ENCODE measurements at regions of chr9 and their contacts with region 1.

Region 1: DNA sequence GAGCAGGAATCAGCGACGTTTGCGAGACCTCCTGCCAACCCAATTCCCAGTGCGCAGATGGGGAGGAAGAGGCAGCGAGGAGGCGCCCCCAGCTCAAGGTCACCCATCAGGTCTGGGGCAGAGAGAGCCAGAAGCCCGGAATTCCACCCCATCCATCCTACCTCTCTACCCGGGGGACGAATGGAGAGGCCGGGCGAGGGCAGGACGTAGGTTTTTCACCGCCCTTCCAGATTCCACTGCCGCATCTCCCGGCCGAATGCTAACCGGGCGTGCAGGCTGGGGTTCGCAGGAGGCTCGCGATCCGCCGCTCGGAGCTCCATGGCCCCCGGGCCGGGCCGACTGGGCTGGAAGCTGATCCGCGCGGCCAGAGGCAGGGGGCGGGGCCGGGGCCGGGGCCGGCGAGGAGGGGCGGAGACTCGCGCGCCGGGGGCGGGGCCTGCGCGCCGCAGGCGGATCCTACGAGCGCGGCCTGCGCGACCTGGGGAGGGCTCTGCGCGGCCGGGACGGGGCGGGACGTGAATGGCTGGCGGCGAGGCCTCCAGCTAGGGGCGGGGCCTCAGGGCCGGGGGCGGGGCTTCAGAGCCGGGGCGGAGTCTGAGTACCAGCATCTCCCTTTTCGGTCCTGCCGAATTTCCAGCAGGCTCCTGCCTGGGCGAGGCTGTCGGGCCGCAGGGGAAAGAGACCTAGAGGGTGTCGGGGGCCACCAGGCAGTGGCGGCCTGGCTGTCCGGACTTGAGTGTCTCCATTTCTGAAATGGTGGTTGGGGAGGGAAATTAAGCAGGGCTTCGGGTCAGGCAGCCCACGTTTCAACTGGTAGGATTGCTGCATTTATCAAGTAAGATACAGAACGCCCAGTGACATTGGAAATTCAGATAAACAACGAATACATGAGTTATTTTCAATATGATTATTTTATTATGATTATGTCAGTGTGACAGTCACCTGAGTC is at the start of gene ST6GALNAC4:
- DNase-seq: peak; percentile 89 to 93
- ATAC-seq: peak; percentile 75 to 84
- H3K4me3 ChIP-seq: peak within 1 kb of the TSS; percentile 58 to 75 (median 70)
- H3K27ac ChIP-seq: peak within 1 kb of the TSS; percentile 67 to 82 (median 73)
- H3K4me1 ChIP-seq: peaks cover 27 to 28% of the 10 kb centered on the region in 2 donors
- H3K27me3 ChIP-seq: no peaks in the 10 kb centered on the region
- CTCF ChIP-seq: no peak
- POLR2A ChIP-seq: peak; percentile 66 to 68
- total RNA-seq, gene ST6GALNAC4: 11.2 to 48.4 (median 23.6) TPM

Region 2: DNA sequence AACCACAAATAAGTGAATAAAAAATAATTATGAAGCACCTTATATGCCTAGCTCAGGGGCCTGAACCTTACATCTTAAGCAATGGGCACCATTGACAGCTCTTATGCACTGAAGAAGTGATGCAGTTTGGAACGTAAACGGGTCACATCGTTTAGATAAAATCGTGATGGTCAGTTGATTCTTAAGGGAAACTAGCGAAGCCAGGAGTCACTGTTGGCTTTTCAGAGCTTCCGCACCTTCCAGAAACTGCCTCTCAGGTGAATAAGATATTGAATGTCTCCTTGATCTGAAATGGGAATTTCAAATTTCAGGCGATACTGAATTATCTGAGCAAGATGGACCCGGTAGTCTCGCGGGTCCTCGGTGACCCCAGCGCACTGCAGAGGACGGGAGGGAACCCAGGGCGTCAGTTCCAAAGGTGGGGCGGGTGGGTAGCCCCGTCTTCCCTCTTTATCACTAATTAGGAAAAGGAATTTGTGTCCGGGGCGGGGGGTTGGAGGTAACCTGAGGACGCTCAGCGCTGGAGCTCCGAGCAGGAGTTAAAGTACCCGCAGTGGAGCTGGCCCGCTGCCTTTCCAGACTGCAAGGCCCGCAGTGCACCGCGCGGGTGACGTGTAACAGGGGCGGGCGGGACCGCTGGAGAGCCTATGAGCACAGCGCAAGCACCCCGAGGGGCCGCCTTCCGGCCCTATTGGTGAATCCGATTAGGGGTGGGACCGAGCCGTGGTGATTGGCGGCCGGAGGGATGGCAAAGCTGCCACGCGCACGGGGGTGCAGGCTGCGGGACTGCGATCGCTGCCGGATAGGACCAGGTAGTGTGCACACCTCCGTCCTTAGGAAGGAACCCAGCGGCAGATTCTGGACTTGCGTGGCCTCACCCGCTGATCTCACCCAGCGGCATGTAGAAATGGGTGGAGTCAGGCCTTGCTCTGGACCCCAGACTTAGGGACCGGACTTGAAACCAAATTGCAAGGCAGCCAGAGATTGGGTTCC is 672.0 kb before region 1 on chr9:
- in situ Hi-C with region 1: loop called in 1 of 4 experiments (anchors 25 kb)
- intact Hi-C with region 1: no loop called
- DNase-seq: peak; percentile 96 to 97
- ATAC-seq: peak; percentile 97 to 98
- H3K4me3 ChIP-seq: peak overlapping the region; percentile 61 to 85 (median 72)
- H3K27ac ChIP-seq: peak overlapping the region; percentile 81 to 95 (median 86)
- H3K4me1 ChIP-seq: peaks cover 5 to 12% of the 10 kb centered on the region in 2 donors
- H3K27me3 ChIP-seq: no peaks in the 10 kb centered on the region
- CTCF ChIP-seq: no peak
- POLR2A ChIP-seq: peak; percentile 43 to 61

Region 3: GRCh38 chr9:127388037-127388855 is 528.7 kb before region 1 on chr9:
- in situ Hi-C with region 1: no loop called
- intact Hi-C with region 1: no loop called
- DNase-seq: peak in 1 of 2 donors; percentile 32
- ATAC-seq: peak; percentile 41 to 65
- H3K4me3 ChIP-seq: no peak overlapping the region
- H3K27ac ChIP-seq: no peak overlapping the region
- H3K4me1 ChIP-seq: no peaks in the 10 kb centered on the region
- H3K27me3 ChIP-seq: no peaks in the 10 kb centered on the region
- CTCF ChIP-seq: no peak
- POLR2A ChIP-seq: no peak

Region 4: GRCh38 chr9:127586537-127586936 is 330.4 kb before region 1 on chr9:
- in situ Hi-C with region 1: loop called (anchors 5 to 10 kb)
- intact Hi-C with region 1: loop called (anchors 2 kb)
- DNase-seq: peak; percentile 68 to 69
- ATAC-seq: peak; percentile 82 to 90
- H3K4me3 ChIP-seq: no peak overlapping the region
- H3K27ac ChIP-seq: no peak overlapping the region
- H3K4me1 ChIP-seq: no peaks in the 10 kb centered on the region
- H3K27me3 ChIP-seq: no peaks in the 10 kb centered on the region
- CTCF ChIP-seq: peak; percentile 77 to 86 (median 84)
- POLR2A ChIP-seq: no peak

Region 5: DNA sequence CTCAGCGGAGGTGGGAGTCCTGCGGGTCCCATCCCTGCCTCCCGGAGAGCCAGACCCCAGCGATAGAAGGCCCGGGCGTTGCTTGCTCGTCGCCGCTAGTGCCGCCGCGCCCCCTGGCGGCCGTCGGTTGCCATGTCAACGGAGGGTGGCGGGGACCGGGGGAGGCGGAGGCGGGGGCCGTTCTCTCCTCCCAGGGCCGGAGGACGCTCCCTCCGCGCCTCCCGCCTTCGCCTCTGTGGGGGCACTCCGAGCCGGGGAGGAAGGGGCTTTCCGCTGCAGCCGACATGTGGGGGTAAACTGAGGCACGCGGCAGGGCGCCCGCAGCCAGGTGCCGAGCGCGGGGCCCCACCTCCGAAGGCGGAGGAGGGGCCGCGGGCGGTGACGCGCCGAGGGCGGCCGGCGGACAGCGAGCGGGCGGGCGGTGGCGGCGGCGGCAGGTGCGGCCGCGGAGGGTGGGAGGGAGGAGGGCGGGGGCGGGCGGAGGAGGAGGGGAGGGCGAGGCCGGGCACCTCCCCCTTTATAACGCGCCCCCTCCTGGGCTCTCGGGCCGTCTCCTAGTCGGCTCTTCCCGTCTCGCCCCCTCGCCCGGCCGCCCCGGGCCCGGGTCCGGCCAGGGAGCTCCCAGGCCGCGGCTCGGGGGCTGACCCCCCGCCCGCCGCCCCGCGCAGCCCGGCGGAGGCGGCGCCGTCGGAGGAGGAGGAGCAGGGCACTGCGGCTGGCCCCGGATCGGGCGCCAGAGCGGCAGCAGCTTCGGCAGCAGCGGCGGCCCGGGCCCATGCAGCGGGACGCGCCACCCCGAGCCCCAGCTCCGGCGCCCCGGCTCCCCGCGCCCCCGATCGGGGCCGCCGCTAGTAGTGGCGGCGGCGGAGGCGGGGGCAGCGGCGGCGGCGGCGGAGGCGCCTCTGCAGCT is 131.7 kb before region 1 on chr9:
- in situ Hi-C with region 1: no loop called
- intact Hi-C with region 1: loop called (anchors 5 kb)
- DNase-seq: peak; percentile 73 to 84
- ATAC-seq: peak; percentile 80
- H3K4me3 ChIP-seq: peak overlapping the region; percentile 59 to 100 (median 92)
- H3K27ac ChIP-seq: peak overlapping the region; percentile 89 to 98 (median 96)
- H3K4me1 ChIP-seq: peaks cover 7 to 12% of the 10 kb centered on the region in 2 donors
- H3K27me3 ChIP-seq: no peaks in the 10 kb centered on the region
- CTCF ChIP-seq: peak; percentile 79 to 99 (median 99)
- POLR2A ChIP-seq: no peak

Region 6: GRCh38 chr9:127877566-127877998 is 39.4 kb before region 1 on chr9 and contains the start of gene AK1:
- in situ Hi-C with region 1: no loop called
- intact Hi-C with region 1: loop called (anchors 2 kb)
- DNase-seq: peak; percentile 75 to 83
- ATAC-seq: peak; percentile 68 to 70
- H3K4me3 ChIP-seq: peak within 1 kb of the TSS; percentile 60 to 74 (median 68)
- H3K27ac ChIP-seq: peak within 1 kb of the TSS; percentile 86 to 96 (median 91)
- H3K4me1 ChIP-seq: peaks cover 47 to 48% of the 10 kb centered on the region in 2 donors
- H3K27me3 ChIP-seq: no peaks in the 10 kb centered on the region
- CTCF ChIP-seq: no peak
- POLR2A ChIP-seq: peak; percentile 74 to 90
- total RNA-seq, gene AK1: 240 to 489 (median 359) TPM

Region 7: DNA sequence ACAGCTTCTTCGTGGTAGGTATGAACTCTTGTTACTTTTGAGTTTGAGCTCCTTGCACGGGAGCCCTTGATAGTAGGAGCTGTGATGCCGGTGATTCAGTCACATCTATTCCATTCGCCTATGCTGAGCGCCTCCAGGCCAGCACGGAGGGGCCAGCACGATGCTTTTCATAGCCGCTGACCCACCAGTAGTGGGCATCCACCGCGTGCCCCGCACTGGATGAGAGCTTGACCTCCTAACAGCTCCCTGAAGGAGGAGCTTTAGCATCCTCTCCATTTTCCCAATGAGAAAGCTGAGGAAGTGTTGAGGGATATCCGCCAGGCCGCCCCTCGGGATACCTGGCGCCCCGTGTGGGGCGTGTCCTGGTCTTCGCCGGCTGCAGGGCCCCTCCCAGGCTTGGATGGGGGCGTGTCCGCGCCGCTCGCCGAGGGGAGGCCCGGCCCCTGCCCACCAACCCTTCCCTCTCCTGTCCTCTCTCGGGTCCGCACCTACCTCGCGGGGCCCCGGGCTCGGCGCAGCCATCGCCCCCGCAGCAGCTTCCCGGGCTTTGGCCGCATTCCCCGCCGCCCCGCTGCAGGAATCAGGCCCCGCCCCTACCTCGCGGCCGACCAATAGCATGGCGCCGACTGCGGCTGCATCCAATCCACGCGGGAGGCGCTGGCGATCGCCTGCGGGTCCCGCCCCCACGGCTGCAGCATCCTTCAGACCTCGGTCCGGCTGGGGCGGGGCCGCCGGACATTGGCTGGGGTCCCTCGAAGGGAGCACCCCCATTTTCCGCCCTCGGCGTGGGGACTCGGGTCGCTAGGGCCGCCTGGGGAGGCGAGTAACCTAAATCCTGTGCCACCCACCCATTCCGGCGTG is 13.5 kb after region 1 on chr9 and contains the start of gene PIP5KL1:
- in situ Hi-C with region 1: no loop called
- intact Hi-C with region 1: no loop called
- DNase-seq: peak; percentile 53 to 58
- ATAC-seq: peak; percentile 72 to 77
- H3K4me3 ChIP-seq: peak within 1 kb of the TSS; percentile 44 to 62 (median 56)
- H3K27ac ChIP-seq: no peak within 1 kb of the TSS
- H3K4me1 ChIP-seq: peaks cover 12 to 18% of the 10 kb centered on the region in 2 donors
- H3K27me3 ChIP-seq: peaks cover 29 to 51% (median 41%) of the 10 kb centered on the region in 3 donors
- CTCF ChIP-seq: no peak
- POLR2A ChIP-seq: no peak
- total RNA-seq, gene PIP5KL1: 4.2 TPM in 1 of 4 donors, not detected in the others